Right cardiac atrium (tissue), 5 donors: ENCODE measurements at regions of chr4 and their contacts with region 1.

Region 1: DNA sequence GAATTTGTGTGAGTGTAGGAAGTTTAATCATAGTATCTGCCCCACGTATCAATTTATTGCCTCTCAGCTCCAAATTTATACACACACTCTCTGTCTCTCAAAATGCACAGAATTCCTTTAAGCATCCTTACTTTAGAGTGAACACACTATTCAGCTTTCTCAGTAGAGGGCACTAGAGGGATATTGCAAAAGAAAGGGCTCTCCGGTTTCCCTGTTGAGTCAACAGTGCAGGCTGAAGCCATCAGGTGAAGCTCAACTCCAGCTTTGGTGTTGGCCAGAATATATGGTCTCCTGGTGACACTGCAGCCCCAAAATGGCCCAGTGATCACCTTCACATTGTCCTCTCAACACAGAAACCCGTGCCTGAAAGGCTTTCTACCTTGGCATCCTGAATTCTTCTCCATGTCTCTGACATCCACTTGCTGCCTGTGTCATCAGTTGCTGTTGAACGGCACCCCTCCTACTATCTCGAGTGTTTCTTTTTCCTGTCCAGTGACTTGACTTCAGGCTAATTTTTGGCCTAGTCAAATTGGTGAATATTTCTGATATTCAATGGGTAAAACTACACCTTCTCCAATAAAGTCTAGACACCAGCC is 670.5 kb downstream of the GABRG1 start:
- DNase-seq: no peak
- ATAC-seq: peak in 1 of 2 donors; percentile 52
- H3K4me3 ChIP-seq: no peak overlapping the region
- H3K27ac ChIP-seq: no peak overlapping the region
- H3K4me1 ChIP-seq: no peaks in the 10 kb centered on the region
- H3K27me3 ChIP-seq: no peaks in the 10 kb centered on the region

Region 2: GRCh38 chr4:45716093-45716492 is 262.7 kb after region 1 on chr4:
- intact Hi-C with region 1: no loop called
- DNase-seq: no peak
- ATAC-seq: no peak
- H3K4me3 ChIP-seq: no peak overlapping the region
- H3K27ac ChIP-seq: no peak overlapping the region
- H3K4me1 ChIP-seq: no peaks in the 10 kb centered on the region
- H3K27me3 ChIP-seq: no peaks in the 10 kb centered on the region

Region 3: GRCh38 chr4:45985038-45985437 is 531.7 kb after region 1 on chr4:
- intact Hi-C with region 1: no loop called
- DNase-seq: no peak
- ATAC-seq: no peak
- H3K4me3 ChIP-seq: no peak overlapping the region
- H3K27ac ChIP-seq: no peak overlapping the region
- H3K4me1 ChIP-seq: no peaks in the 10 kb centered on the region
- H3K27me3 ChIP-seq: no peaks in the 10 kb centered on the region

Region 4: GRCh38 chr4:46270986-46271596 is 817.7 kb after region 1 on chr4:
- intact Hi-C with region 1: loop called in 2 of 4 experiments (anchors 5 to 10 kb)
- DNase-seq: no peak
- ATAC-seq: no peak
- H3K4me3 ChIP-seq: no peak overlapping the region
- H3K27ac ChIP-seq: no peak overlapping the region
- H3K4me1 ChIP-seq: no peaks in the 10 kb centered on the region
- H3K27me3 ChIP-seq: no peaks in the 10 kb centered on the region